ENCODE measurements at regions of chr1 and their contacts with region 1.

Region 1: GRCh38 chr1:160354388-160354985 is 11.3 kb downstream of the NCSTN start:
- DNase-seq: no peak
- H3K4me3 Mint-ChIP-seq: no peak overlapping the region
- H3K27ac Mint-ChIP-seq: no peak overlapping the region
- H3K4me1 Mint-ChIP-seq: peaks cover 10% of the 10 kb centered on the region
- H3K27me3 Mint-ChIP-seq: no peaks in the 10 kb centered on the region

Region 2: DNA sequence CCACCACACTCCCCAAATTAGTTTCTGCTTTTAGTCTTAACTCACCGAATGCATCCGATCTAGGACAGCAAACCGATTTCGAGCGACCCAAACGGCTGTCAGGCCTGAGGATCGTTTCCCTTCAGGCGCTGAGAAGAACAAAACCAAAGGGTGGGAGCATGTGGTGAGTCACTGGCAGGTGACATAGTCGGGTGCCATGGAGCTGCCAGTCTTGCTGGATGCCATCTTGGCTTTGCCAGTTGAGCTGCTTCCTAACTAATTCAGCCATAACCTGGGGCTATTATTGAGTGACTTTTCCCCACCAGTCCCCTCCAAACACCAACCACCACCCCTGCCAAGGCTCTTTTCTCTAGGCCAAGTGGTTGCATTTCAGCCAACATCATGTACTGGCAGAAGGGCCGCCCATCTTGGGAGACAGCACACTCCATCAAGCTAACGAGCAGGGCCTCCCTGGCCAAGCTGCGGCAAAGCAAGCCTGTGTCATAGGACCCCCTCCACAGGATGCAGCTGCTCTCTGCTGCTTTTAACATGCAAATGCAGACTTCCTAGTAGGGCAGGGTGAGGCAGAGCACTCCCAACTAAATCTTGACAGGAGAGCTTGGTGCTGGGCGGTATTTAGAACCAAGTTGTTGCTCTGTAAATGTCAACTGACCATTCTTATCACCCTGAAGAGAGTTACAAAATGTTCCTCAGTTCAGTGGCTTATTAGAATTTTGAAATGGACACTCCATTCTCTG is 47.2 kb before region 1 on chr1:
- CTCF ChIA-PET with region 1: no interaction called
- POLR2A ChIA-PET with region 1: no interaction called
- DNase-seq: no peak
- H3K4me3 Mint-ChIP-seq: no peak overlapping the region
- H3K27ac Mint-ChIP-seq: no peak overlapping the region
- H3K4me1 Mint-ChIP-seq: no peaks in the 10 kb centered on the region
- H3K27me3 Mint-ChIP-seq: no peaks in the 10 kb centered on the region

Region 3: GRCh38 chr1:160342953-160343869 is 11.3 kb before region 1 on chr1 and contains the starts of genes COPA and NCSTN:
- CTCF ChIA-PET with region 1: interaction called, 13 read pairs
- POLR2A ChIA-PET with region 1: interaction called, 5 read pairs
- DNase-seq: peak; percentile 92
- H3K4me3 Mint-ChIP-seq: peak within 1 kb of the TSS; percentile 99
- H3K27ac Mint-ChIP-seq: peak within 1 kb of the TSS; percentile 97
- H3K4me1 Mint-ChIP-seq: peaks cover 59% of the 10 kb centered on the region
- H3K27me3 Mint-ChIP-seq: no peaks in the 10 kb centered on the region
- total RNA-seq, gene COPA: 145 to 146 TPM
- total RNA-seq, gene NCSTN: 64.5 to 65.3 TPM

Region 4: GRCh38 chr1:160394673-160395072 is 40.2 kb after region 1 on chr1:
- CTCF ChIA-PET with region 1: no interaction called
- POLR2A ChIA-PET with region 1: no interaction called
- DNase-seq: no peak
- H3K4me3 Mint-ChIP-seq: no peak overlapping the region
- H3K27ac Mint-ChIP-seq: no peak overlapping the region
- H3K4me1 Mint-ChIP-seq: peaks cover 5% of the 10 kb centered on the region
- H3K27me3 Mint-ChIP-seq: peaks cover 38% of the 10 kb centered on the region

Measured in activated CD4-positive, alpha-beta memory T cell treated with anti-CD3 and anti-CD28 coated beads, Interleukin-2, amount 10 ng/mL, durations not matched to agents 7 days and 5 days (primary cell).